Mammary epithelial cell (primary cell): ENCODE measurements at regions of chr3 and their contacts with region 1.

Region 1: GRCh38 chr3:64739971-64740631 is 52.3 kb upstream of the ADAMTS9 start:
- DNase-seq: no peak
- H3K4me3 ChIP-seq: no peak overlapping the region
- H3K27ac ChIP-seq: no peak overlapping the region
- H3K4me1 ChIP-seq: no peaks in the 10 kb centered on the region
- H3K27me3 ChIP-seq: no peaks in the 10 kb centered on the region
- CTCF ChIP-seq: no peak

Region 2: DNA sequence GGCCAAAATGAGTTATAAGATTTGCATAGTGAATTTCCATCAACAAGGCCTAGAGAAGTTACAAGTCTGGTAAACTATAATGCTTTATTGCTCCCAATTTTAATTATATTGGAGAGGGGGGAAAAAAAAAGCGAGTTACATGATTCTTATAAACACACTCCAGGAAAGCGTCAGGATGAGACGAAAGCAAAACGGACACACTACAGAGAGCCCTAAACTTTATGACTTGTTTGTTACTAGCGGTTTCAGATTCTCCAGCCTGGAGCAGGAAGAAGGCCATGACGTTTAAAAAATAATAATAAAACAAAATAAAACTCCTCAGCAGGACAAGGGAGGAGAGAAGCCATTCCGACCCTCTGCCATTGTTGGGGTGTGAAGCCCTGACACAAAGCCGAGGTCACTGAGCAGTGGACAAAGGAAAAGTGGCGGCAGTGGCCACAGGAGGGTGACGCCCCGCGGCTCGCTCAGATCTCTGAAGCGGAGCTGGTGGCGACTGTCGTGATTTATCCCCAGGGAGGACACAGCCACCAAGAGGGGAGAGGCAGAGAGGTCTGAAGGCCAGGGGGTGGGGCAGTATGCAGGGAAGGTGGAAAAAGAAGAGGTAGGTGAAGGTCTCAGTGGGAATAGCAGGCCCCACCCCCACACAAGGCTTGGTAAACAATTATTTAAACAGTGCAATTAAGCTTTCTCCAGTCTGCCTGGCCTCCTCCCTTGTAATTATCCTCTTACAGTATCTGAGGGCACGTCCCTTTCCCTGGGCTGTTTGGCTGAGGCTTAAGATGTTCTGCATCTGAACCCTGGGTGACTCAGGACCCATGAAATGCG is 97.6 kb before region 1 on chr3:
- CTCF ChIA-PET with region 1: no interaction called
- dilution Hi-C with region 1: loop called (anchors 5 kb)
- in situ Hi-C with region 1: no loop called
- intact Hi-C with region 1: no loop called
- DNase-seq: no peak
- H3K4me3 ChIP-seq: no peak overlapping the region
- H3K27ac ChIP-seq: no peak overlapping the region
- H3K4me1 ChIP-seq: no peaks in the 10 kb centered on the region
- H3K27me3 ChIP-seq: no peaks in the 10 kb centered on the region
- CTCF ChIP-seq: no peak

Region 3: DNA sequence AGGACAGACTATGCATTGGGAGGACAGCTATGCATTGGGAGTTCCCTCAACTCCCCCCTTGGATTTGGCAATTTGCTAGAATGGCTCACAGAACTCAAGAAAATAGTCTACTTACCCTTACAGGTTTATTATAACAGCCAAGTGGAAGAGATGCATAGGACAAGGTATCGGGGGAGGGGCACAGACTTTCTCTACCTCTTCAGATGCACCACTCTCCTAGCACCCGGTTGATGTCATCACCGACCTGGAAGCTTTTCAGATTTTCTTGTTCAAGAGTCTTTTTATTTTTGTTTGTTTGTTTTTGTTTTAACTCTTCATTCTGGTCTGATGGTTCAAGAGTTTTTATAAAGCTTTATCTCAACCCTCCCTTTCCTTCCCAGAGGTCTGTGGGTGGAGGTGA is 31.6 kb before region 1 on chr3:
- CTCF ChIA-PET with region 1: no interaction called
- dilution Hi-C with region 1: no loop called
- in situ Hi-C with region 1: no loop called
- intact Hi-C with region 1: no loop called
- DNase-seq: no peak
- H3K4me3 ChIP-seq: no peak overlapping the region
- H3K27ac ChIP-seq: no peak overlapping the region
- H3K4me1 ChIP-seq: no peaks in the 10 kb centered on the region
- H3K27me3 ChIP-seq: peaks cover 2% of the 10 kb centered on the region
- CTCF ChIP-seq: no peak

Region 4: GRCh38 chr3:64815195-64815631 is 75.1 kb after region 1 on chr3:
- CTCF ChIA-PET with region 1: no interaction called
- dilution Hi-C with region 1: loop called (anchors 5 kb)
- in situ Hi-C with region 1: no loop called
- intact Hi-C with region 1: no loop called
- DNase-seq: peak; percentile 38
- H3K4me3 ChIP-seq: no peak overlapping the region
- H3K27ac ChIP-seq: no peak overlapping the region
- H3K4me1 ChIP-seq: peaks cover 16% of the 10 kb centered on the region
- H3K27me3 ChIP-seq: no peaks in the 10 kb centered on the region
- CTCF ChIP-seq: no peak